ENCODE measurements at regions of chr21 and their contacts with region 1.

Region 1: GRCh38 chr21:30166171-30166570 is 434 bp downstream of the CLDN17 start:
- DNase-seq: no peak
- H3K27ac ChIP-seq: no peak overlapping the region
- CTCF ChIP-seq: no peak

Region 2: DNA sequence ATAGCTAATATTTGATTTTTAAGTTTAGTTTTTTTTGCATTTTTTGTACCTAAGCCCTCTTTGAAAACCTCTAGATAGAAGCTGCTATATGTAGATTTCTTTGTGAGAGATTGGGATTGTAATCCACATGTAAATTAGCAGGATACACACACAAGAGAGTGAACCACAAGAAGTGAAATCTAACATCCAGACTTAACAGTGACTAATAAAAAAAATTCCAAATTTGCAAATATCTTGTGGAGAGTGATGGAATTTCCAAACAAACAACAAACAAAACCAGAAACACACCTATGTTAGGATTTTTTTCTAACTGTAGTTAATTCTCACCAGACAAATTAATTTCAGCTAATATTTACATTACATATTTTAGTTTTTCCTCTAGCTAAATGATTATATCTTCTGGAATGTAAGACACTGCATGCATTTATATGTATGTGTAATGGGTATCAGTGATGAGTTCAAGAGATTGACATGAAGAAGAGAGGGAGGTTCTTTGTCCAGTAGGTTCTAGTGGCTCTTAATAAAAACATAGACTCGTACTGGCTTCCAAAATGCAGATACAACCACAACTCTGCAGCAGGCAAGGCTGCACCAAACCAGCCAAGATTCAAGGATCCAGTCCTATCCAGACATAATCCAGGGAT is 12.4 kb before region 1 on chr21:
- CTCF ChIA-PET with region 1: no interaction called
- POLR2A ChIA-PET with region 1: no interaction called
- DNase-seq: peak; percentile 30
- H3K27ac ChIP-seq: no peak overlapping the region
- CTCF ChIP-seq: no peak

Region 3: DNA sequence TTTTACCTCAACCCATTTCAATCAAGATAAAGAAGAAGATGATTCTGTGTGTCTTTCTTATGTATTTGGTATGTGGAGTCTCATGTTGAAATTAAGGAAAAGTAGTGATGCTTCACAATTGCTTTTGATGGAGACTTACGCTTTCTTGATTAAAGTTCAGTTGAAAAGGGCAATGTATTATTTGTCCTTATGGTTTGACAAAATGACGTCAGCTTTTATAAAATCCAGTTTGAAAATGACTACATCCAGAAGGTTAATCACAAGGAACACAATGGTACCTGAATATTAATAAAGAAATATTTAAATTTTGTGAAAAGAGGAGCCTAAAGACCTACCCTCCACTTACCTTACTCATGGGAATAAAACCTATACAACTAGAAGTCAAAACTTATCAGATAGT is 149.5 kb after region 1 on chr21:
- CTCF ChIA-PET with region 1: interaction called, 10 read pairs
- POLR2A ChIA-PET with region 1: no interaction called
- DNase-seq: no peak
- H3K27ac ChIP-seq: no peak overlapping the region
- CTCF ChIP-seq: no peak